Esophagus muscularis mucosa (tissue), 4 donors: ENCODE measurements at regions of chr6 and their contacts with region 1.

Region 1: GRCh38 chr6:127129251-127129903 is 10.9 kb downstream of the RSPO3 start:
- DNase-seq: no peak
- H3K4me3 ChIP-seq: no peak overlapping the region
- H3K27ac ChIP-seq: no peak overlapping the region
- H3K4me1 ChIP-seq: peaks cover 0 to 88% (median 38%) of the 10 kb centered on the region in 4 donors
- H3K27me3 ChIP-seq: no peaks in the 10 kb centered on the region
- CTCF ChIP-seq: no peak
- EP300 ChIP-seq: no peak
- POLR2A ChIP-seq: no peak

Region 2: GRCh38 chr6:127207591-127208120 is 78.3 kb after region 1 on chr6:
- intact Hi-C with region 1: no loop called
- DNase-seq: no peak
- H3K4me3 ChIP-seq: no peak overlapping the region
- H3K27ac ChIP-seq: no peak overlapping the region
- H3K4me1 ChIP-seq: no peaks in the 10 kb centered on the region
- H3K27me3 ChIP-seq: no peaks in the 10 kb centered on the region
- CTCF ChIP-seq: no peak
- EP300 ChIP-seq: no peak
- POLR2A ChIP-seq: no peak

Region 3: DNA sequence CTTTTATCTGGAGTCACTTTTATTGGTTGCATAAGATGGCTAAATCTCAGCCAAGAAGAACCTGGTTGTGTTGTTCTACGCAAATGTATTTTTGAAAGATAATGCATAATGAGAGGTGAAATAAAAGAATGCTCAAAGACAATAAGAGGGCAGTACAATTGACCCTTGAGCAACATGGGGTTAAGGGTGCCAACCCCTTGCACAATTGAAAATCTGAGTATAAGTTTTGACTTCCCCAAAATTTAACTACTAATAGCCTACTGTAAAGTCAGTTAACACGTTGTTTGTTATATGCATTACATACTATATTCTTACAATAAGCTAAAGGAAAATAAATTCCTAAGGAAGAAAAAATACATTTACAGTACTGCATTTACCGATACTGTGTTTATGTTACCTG is 143.2 kb after region 1 on chr6:
- intact Hi-C with region 1: loop called (anchors 5 kb)
- DNase-seq: no peak
- H3K4me3 ChIP-seq: no peak overlapping the region
- H3K27ac ChIP-seq: no peak overlapping the region
- H3K4me1 ChIP-seq: peaks cover 53 to 82% (median 64%) of the 10 kb centered on the region in 4 donors
- H3K27me3 ChIP-seq: no peaks in the 10 kb centered on the region
- CTCF ChIP-seq: no peak
- EP300 ChIP-seq: no peak
- POLR2A ChIP-seq: no peak